ENCODE measurements at regions of chr10 and their contacts with region 1.

Region 1: DNA sequence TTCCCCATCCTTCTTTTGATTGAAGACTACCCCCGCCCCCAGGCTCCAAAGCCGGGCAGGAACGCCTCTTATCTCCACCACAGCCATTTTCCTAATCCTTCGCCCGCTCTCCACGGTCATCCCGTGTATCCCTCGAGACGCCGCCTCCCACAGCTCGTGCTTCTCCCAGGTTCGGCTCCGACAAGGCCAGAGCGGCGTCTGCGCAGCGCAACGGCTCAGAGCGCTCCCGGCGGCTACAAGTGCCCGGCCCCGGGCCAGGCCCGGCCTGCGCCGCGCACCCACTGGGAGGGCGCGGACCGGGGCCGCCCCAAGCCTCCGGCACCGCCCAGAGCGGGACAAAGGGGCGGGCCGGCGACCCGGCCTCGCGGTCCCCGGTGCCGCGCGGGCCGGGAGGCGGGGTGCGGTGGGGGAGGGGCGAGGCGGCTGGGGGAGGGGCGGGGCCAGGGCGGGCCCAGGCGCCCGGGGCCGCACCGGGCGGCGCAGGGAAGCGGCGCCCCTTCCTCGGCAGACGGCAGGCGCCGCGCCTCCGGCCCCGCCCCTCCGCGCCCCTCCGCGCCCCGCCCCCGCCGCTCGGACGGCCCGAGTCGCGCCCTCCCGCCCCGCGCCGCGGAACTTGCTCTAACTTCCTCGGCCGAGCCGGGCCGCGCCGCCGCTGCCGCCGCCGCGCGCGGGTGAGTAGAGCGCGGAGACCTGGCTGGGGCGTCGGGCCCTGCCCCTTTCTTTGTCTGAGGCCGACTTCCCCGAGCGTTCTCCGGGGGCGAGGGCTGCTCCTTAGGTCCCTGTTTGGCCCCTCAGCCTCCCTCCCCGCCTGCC is at the start of gene TSPAN14:
- DNase-seq: peak; percentile 86
- ATAC-seq: peak; percentile 67
- H3K4me3 Mint-ChIP-seq: peak within 1 kb of the TSS; percentile 99
- H3K27ac Mint-ChIP-seq: peak within 1 kb of the TSS; percentile 98
- H3K4me1 Mint-ChIP-seq: peaks cover 45% of the 10 kb centered on the region
- H3K27me3 Mint-ChIP-seq: no peaks in the 10 kb centered on the region
- total RNA-seq, gene TSPAN14: 37.6 to 43.8 TPM

Region 2: GRCh38 chr10:80205478-80206276 is 248.2 kb before region 1 on chr10 and contains the start of gene ANXA11:
- CTCF ChIA-PET with region 1: no interaction called
- POLR2A ChIA-PET with region 1: no interaction called
- intact Hi-C with region 1: loop called (anchors 1 to 5 kb)
- DNase-seq: peak; percentile 92
- ATAC-seq: peak; percentile 63
- H3K4me3 Mint-ChIP-seq: peak within 1 kb of the TSS; percentile 86
- H3K27ac Mint-ChIP-seq: peak within 1 kb of the TSS; percentile 95
- H3K4me1 Mint-ChIP-seq: peaks cover 43% of the 10 kb centered on the region
- H3K27me3 Mint-ChIP-seq: no peaks in the 10 kb centered on the region
- total RNA-seq, gene ANXA11: 256 to 348 TPM

Region 3: DNA sequence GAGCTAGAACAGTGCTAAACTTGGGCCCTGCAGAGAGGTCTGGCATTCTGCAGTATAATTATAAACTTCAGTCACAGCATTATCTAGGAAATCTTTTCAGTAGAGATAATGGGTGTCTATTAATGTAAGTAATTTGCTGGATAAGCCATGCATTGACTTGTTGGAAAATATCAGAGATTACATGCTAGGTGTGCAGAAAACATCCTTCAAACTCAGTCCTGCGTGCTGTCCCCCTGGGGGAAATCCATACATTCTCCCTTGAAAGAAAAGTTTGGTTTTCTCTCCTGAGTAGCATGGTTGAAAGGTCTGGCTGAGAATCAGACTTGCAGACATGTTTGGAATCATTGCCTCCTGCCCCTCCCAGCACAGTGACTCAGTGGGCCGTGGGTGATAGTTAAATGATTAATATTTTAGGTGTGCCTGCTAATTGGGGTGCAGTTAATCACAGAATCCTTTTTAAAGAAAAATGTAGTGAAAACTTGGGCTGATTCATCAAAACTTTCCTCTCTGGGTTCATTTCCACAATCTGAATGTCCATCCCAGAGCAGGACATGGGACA is 59.5 kb before region 1 on chr10:
- CTCF ChIA-PET with region 1: no interaction called
- POLR2A ChIA-PET with region 1: no interaction called
- intact Hi-C with region 1: no loop called
- DNase-seq: no peak
- ATAC-seq: no peak
- H3K4me3 Mint-ChIP-seq: no peak overlapping the region
- H3K27ac Mint-ChIP-seq: no peak overlapping the region
- H3K4me1 Mint-ChIP-seq: no peaks in the 10 kb centered on the region
- H3K27me3 Mint-ChIP-seq: no peaks in the 10 kb centered on the region

Region 4: DNA sequence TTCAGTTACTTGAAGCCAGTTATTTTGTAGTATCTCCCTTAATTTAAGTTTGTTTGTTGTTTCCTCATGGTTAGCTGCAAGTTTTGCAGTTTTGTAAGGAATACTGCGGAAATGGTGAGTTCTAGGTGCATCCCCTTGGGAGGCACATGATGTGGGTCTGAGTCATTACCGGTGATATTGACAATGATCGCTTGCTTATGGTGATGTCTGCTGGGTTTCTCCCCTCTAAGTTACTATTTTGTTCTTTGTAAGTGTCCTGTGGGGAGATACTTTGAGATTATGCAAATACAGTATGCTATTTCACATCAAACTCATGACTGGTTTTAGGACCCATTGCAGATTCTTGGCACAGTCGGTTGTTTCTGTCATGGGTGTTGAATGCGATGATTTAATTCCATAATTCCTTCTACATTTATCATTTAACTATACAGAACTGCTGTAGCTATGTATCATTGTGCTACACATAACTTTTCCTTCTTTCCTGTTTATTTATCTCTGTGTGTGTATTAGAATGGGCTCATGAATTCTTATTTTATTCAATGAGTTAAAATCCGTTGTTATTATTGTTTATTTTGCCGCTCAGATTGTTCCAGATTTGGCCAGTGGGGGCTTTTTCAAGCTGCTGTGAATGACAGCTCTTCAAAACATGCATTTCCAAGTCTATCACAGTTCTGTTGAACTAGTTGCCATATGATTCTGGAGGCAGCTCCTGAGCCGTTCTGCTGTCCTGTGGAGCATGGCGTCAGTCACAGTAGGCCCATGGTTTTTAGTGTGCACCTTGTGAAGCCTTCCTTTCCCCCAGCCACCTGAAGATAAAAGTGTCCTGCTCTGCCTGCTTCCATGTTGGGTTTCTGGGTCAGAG is 18.6 kb after region 1 on chr10:
- CTCF ChIA-PET with region 1: interaction called, 73 read pairs
- POLR2A ChIA-PET with region 1: interaction called, 6 read pairs
- intact Hi-C with region 1: loop called (anchors 1 kb)
- DNase-seq: peak; percentile 66
- ATAC-seq: peak; percentile 80
- H3K4me3 Mint-ChIP-seq: peak overlapping the region; percentile 61
- H3K27ac Mint-ChIP-seq: peak overlapping the region; percentile 91
- H3K4me1 Mint-ChIP-seq: peaks cover 93% of the 10 kb centered on the region
- H3K27me3 Mint-ChIP-seq: no peaks in the 10 kb centered on the region

Region 5: DNA sequence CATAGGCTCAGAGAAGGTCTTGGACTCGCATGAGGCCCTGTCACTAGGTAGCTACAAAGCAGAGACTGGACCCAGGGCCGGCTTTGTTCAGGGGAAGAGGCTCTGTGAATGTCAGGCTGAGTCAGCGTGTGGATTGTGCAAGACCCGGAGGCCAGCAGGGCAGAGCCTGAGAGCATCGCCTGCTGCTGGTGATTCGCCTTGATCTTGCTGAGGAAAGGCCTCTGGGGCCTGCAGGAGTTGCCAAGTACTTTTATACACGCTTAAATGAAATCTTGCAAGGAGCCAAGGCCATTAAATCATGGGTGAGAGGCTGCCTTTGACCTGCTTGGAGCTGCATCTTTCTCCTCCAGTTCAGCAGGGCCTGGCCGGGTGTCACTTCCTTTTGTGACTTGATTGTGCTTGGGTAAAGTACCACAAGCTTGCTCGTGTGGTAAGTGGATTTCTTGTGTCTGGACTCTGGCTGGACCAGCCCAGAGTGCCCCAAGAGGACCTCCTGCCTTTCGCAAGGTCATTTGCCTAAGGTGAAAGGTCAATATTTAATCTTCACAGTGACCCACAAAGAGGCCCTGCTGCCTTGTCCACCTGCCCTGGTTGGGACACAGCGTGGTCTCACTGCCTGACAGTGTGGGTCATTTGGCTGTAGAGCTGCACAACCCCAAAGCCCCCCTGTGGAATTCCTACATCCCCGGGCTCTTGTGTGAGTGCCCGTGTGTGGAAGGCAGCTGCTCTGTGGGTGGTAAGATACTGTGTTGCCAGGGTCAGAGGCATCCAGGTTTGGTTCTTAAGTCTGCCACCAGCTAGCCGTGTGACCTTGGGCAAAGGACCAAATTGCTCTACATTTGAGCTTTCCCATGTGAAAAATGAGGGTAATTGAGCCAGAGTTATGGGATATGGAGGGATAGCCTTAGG is 45.2 kb after region 1 on chr10:
- CTCF ChIA-PET with region 1: interaction called, 372 read pairs
- POLR2A ChIA-PET with region 1: interaction called, 7 read pairs
- intact Hi-C with region 1: loop called (anchors 1 to 2 kb)
- DNase-seq: peak; percentile 88
- ATAC-seq: peak; percentile 85
- H3K4me3 Mint-ChIP-seq: peak overlapping the region; percentile 23
- H3K27ac Mint-ChIP-seq: peak overlapping the region; percentile 98
- H3K4me1 Mint-ChIP-seq: peaks cover 100% of the 10 kb centered on the region
- H3K27me3 Mint-ChIP-seq: no peaks in the 10 kb centered on the region

Measured in activated CD4-positive, alpha-beta T cell treated with anti-CD3 and anti-CD28 coated beads for 36 hours (primary cell).